Common myeloid progenitor, CD34-positive (primary cell): ENCODE measurements at regions of chr11 and their contacts with region 1.

Region 1: GRCh38 chr11:130076778-130077481 is 7.2 kb downstream of the APLP2 start:
- DNase-seq: no peak
- H3K4me3 ChIP-seq: no peak overlapping the region
- H3K27ac ChIP-seq: no peak overlapping the region
- H3K4me1 ChIP-seq: peaks cover 0 to 29% (median 11%) of the 10 kb centered on the region in 4 experiments
- H3K27me3 ChIP-seq: no peaks in the 10 kb centered on the region

Region 2: DNA sequence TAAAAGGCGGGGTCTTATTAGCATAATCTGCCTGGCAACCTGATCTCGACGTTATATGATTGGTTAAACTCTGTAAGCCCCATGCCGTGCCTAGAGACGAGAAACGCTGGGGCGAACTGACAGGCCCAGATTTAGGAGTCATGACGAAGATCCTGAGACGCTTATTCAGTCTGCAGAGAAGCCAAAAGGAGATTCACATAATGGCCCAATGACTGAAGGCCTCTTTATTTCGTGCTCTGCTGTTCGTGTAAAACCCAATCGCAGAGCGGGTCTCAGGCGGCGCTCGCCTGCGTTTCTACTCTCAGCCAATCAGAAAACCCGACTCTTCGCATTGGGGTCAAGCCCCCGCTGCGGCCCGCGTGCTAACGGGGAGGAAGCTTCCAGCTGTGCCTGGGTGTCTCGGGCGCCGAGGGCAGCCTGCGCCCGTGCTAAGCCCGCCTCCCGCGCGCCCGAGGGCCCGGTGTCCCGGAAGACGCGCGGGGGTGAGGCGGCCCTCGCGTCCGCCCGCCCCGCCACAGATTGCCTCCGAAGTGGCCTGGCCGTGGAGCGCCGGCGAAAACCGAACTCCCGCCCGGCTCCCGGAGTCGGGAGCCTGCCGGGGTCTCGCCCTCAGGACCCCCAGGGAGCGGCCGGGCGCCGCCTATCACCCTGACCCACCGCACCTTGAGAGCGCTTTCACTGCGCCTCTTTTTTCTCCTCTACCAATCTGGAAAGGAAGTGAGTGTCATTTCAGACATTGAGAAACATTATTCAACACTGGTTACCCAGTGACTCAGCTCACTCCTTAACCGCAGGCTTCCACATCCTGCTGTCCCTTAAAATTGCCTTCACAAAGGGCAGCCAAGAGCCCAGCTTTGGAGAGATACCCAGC is 73.8 kb before region 1 on chr11:
- CTCF ChIA-PET with region 1: no interaction called
- POLR2A ChIA-PET with region 1: interaction called, 30 read pairs
- DNase-seq: peak; percentile 97 to 98 (median 98)
- H3K4me3 ChIP-seq: peak overlapping the region; percentile 70 to 94 (median 84)
- H3K27ac ChIP-seq: peak overlapping the region; percentile 99 to 100
- H3K4me1 ChIP-seq: peaks cover 7 to 46% (median 35%) of the 10 kb centered on the region in 4 experiments
- H3K27me3 ChIP-seq: no peaks in the 10 kb centered on the region

Region 3: DNA sequence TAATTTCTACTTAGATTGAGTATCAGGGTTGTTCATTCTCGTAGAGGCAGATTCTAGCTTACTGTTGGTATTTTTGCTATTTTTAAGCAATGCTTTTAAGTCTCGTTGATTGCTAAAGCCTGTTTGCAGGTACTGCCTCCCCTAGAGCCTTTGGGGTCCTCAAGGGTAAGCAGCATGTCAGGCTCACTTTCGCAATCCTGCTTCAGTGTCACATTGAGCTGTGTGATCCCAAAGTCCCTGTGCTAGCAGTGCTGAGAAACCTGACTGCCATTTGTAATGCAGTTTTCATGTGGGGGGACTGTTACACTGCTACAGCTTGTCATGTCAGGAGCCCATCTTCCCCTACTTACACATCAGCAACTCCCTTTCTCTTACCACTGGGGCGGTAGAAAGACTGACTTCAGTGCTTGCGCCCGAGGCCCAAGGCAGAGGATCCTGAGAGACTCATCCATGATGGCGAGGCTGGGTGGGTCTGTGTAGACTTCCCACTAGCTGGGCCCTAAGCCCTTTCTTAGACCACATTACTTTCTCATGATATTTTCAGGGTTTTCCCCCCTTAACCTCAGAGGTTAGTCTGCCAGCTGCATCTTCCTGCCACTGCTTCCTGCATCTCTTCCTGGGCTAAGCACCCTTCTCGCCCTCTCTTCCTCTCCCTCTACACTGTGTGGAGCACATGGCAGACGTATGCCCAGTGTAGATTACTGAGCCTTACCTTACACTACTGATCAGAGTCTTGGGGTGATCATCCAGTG is 41.9 kb after region 1 on chr11:
- CTCF ChIA-PET with region 1: interaction called, 10 read pairs
- POLR2A ChIA-PET with region 1: no interaction called
- DNase-seq: peak in 2 of 3 donors; percentile 53 to 67
- H3K4me3 ChIP-seq: no peak overlapping the region
- H3K27ac ChIP-seq: no peak overlapping the region
- H3K4me1 ChIP-seq: peaks cover 25 to 39% (median 25%) of the 10 kb centered on the region in 4 experiments
- H3K27me3 ChIP-seq: no peaks in the 10 kb centered on the region

Region 4: DNA sequence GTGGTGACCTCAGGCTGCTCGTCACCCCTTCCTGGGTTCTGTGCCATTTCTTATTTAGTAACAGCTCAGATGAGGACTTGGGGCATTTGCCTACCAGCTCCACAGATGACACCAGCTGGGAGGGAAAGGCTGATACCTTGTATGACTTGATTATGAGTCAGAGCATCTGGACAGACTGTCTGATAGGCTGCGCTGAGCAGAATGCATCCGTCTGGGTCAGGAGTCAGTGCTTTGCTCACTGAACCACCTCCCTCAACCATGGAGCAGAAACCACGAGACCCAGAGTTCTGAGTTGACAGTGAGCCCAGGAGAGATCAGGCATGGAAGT is 89.5 kb after region 1 on chr11:
- CTCF ChIA-PET with region 1: no interaction called
- POLR2A ChIA-PET with region 1: no interaction called
- DNase-seq: peak in 1 of 3 donors; percentile 15
- H3K4me3 ChIP-seq: no peak overlapping the region
- H3K27ac ChIP-seq: no peak overlapping the region
- H3K4me1 ChIP-seq: peaks cover 0 to 2% (median 0%) of the 10 kb centered on the region in 4 experiments
- H3K27me3 ChIP-seq: peaks cover 0 to 24% (median 12%) of the 10 kb centered on the region in 5 experiments